ENCODE measurements at regions of chr20 and their contacts with region 1.

Region 1: GRCh38 chr20:46089417-46090388 is at the start of gene NCOA5:
- DNase-seq: peak; percentile 92 to 95
- ATAC-seq: peak; percentile 95 to 96
- H3K4me3 ChIP-seq: peak within 1 kb of the TSS; percentile 79 to 94 (median 88)
- H3K27ac ChIP-seq: peak within 1 kb of the TSS; percentile 89 to 98 (median 95)
- H3K4me1 ChIP-seq: peaks cover 45 to 47% of the 10 kb centered on the region in 2 donors
- H3K27me3 ChIP-seq: no peaks in the 10 kb centered on the region
- CTCF ChIP-seq: peak in 3 of 5 experiments; percentile 30 to 39 (median 36)
- POLR2A ChIP-seq: peak; percentile 89 to 92
- total RNA-seq, gene NCOA5: 14.7 to 21.5 (median 19.0) TPM

Region 2: DNA sequence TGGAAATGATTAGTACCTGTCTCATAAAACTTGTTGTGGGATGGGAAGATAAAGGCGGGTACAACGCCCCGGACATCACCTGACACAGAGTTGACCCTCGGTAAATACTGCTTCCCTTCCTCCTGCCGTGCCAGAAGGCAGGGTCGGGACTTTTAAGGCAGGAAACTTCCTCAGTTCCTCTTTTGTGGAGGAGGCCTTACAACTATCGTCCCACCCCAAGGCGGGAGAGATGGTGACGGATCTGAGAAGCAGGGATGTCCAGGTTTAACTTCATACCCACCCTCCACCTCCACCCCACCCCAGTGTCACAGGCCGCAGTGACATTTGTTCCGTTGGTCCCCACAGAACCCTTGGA is 297.4 kb before region 1 on chr20:
- in situ Hi-C with region 1: no loop called
- intact Hi-C with region 1: loop called (anchors 5 kb)
- DNase-seq: no peak
- ATAC-seq: no peak
- H3K4me3 ChIP-seq: peak overlapping the region; percentile 82 to 100 (median 97)
- H3K27ac ChIP-seq: peak overlapping the region; percentile 94 to 100 (median 97)
- H3K4me1 ChIP-seq: peaks cover 21 to 33% of the 10 kb centered on the region in 2 donors
- H3K27me3 ChIP-seq: no peaks in the 10 kb centered on the region
- CTCF ChIP-seq: no peak
- POLR2A ChIP-seq: no peak

Region 3: DNA sequence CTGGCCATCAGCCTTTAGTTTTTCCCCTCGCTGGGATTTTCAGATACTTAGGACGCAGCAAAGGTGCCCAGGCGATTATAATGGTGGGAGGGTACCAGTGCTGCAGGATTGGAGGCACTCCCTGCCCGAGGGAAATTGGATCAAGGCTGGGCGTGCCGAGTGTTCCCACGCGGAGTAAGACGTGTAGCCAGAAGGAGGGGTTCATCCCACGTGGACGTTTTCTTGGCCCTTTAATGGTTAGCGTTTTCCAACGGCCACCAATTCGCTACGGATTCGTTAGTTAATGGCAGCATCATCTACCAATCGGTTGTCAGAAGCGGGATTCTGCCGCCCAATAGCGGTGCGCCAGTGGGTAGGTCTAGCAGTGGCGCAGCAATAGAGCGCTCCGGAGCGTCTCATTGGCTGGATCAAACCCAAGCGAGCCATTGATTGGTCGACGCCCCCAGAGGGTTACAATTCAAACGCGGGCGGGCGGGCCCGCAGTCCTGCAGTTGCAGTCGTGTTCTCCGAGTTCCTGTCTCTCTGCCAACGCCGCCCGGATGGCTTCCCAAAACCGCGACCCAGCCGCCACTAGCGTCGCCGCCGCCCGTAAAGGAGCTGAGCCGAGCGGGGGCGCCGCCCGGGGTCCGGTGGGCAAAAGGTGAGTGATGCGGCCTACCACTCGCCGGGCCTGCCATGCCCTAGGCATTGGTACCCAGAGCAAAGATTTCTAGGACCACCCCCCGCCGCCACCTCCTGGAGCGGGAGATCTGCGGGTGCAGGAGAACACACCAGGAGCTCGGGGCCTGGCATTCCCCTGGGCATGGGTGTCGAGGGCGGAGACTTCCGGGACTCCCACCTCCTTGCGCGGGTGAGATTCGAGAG is 277.3 kb before region 1 on chr20 and contains the start of gene UBE2C:
- in situ Hi-C with region 1: loop called in 3 of 4 experiments (anchors 25 kb)
- intact Hi-C with region 1: no loop called
- DNase-seq: peak; percentile 98 to 99
- ATAC-seq: peak; percentile 97 to 100
- H3K4me3 ChIP-seq: peak within 1 kb of the TSS; percentile 53 to 70 (median 58)
- H3K27ac ChIP-seq: peak within 1 kb of the TSS; percentile 60 to 81 (median 72)
- H3K4me1 ChIP-seq: peaks cover 5 to 14% of the 10 kb centered on the region in 2 donors
- H3K27me3 ChIP-seq: no peaks in the 10 kb centered on the region
- CTCF ChIP-seq: no peak
- POLR2A ChIP-seq: peak in 1 of 2 donors; percentile 22
- total RNA-seq, gene UBE2C: 0.84 TPM in 1 of 4 donors, not detected in the others

Region 4: DNA sequence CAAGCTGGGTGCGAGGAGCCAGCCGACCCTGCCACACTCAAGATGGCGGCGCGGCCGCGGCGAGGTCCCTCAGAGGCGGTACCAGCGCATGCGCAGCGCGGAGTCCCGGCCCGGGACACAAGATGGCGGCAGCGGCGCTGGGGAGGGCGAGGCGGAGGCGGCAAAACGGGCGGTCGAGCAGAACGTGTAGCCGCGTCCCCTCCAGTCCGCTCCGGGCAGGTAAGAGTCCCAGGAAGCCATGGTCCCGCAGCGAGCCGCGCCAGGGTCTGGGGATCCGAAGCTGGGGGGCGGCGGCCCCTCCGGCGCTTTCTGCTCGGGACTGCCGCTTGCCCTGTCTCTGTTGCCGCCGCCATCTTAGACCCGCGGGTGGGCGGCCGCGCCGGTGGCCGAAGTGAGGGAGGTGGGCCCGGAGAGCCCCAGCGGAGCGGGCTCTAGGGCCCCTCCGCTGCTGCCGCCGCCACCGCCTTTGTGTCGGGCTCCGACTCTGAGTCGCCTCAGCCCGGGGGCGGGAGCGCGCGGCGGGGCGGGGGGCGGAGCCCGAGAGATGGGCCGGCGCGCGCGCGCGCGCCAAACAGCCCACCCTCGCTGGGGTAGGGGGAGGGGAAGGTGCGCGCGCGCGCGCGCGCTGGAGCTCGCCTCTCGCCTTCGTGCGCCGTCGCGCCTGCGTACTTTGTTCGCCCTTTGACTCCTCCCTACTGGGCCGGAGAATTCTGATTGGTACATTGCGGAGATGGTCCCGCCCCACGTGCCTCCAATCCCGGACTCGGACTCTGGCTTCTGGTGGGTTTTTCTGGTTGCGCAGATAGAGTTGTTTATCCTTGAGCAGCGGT is 154.9 kb before region 1 on chr20 and contains the start of gene PCIF1:
- in situ Hi-C with region 1: no loop called
- intact Hi-C with region 1: loop called (anchors 5 kb)
- DNase-seq: peak; percentile 98
- ATAC-seq: peak; percentile 91
- H3K4me3 ChIP-seq: peak within 1 kb of the TSS; percentile 83 to 99 (median 98)
- H3K27ac ChIP-seq: peak within 1 kb of the TSS; percentile 97 to 100 (median 100)
- H3K4me1 ChIP-seq: peaks cover 21 to 25% of the 10 kb centered on the region in 2 donors
- H3K27me3 ChIP-seq: no peaks in the 10 kb centered on the region
- CTCF ChIP-seq: no peak
- POLR2A ChIP-seq: peak; percentile 95 to 96
- total RNA-seq, gene PCIF1: 32.1 to 51.2 (median 37.0) TPM

Region 5: DNA sequence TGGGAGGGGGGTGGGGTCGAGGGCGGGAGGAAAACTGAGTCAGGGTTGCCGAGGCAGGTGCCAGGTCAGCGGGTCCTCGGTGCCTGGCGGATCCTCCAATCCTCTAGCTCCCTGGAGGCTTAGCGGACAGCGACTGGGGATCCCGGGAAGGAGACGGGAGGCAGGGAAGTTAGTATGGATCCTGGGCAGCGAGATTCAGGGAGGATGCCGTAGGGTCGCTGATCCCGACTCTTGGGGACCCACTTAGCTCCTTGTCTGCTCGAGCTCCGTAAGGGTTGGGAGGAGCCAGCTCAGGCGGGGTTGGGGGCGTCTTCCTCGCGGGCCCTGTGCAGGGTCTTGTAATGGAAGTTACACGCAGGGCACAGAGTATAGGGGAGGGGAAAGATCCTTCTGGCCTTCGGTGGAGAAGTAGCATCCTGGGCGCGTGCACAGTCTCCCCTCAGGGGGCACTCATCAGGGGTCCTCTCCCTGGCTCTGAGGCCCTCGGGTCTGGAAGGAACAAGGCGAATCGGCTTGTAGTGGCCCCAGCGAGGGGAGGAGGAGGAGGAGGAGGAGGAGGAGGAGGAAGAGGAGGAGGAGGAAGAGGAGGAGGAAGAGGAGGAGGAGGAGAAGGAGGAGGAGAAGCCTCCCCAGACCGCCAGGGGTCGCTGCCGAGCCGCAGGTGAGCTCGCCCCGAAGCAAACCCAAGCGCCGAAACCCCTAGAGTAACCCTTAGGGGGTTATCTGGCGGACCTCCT is 67.1 kb before region 1 on chr20:
- in situ Hi-C with region 1: no loop called
- intact Hi-C with region 1: loop called (anchors 2 kb)
- DNase-seq: no peak
- ATAC-seq: peak in 1 of 2 donors; percentile 20
- H3K4me3 ChIP-seq: peak overlapping the region in 1 of 4 donors; percentile 49
- H3K27ac ChIP-seq: no peak overlapping the region
- H3K4me1 ChIP-seq: peaks cover 4 to 13% of the 10 kb centered on the region in 2 donors
- H3K27me3 ChIP-seq: peaks cover 63 to 78% (median 68%) of the 10 kb centered on the region in 3 donors
- CTCF ChIP-seq: peak; percentile 65 to 88 (median 81)
- POLR2A ChIP-seq: no peak

Region 6: GRCh38 chr20:46255429-46256104 is 165.9 kb after region 1 on chr20:
- in situ Hi-C with region 1: no loop called
- intact Hi-C with region 1: loop called (anchors 5 kb)
- DNase-seq: peak; percentile 32 to 87
- ATAC-seq: peak in 1 of 2 donors; percentile 64
- H3K4me3 ChIP-seq: no peak overlapping the region
- H3K27ac ChIP-seq: no peak overlapping the region
- H3K4me1 ChIP-seq: peaks cover 0 to 9% of the 10 kb centered on the region in 2 donors
- H3K27me3 ChIP-seq: peaks cover 18 to 21% (median 18%) of the 10 kb centered on the region in 3 donors
- CTCF ChIP-seq: no peak
- POLR2A ChIP-seq: no peak

Region 7: GRCh38 chr20:46406199-46406985 is 316.7 kb after region 1 on chr20 and contains the start of gene ELMO2:
- in situ Hi-C with region 1: no loop called
- intact Hi-C with region 1: loop called (anchors 1 kb)
- DNase-seq: peak; percentile 97 to 98
- ATAC-seq: peak; percentile 93 to 94
- H3K4me3 ChIP-seq: peak within 1 kb of the TSS; percentile 83 to 98 (median 90)
- H3K27ac ChIP-seq: peak within 1 kb of the TSS; percentile 94 to 98 (median 96)
- H3K4me1 ChIP-seq: peaks cover 52 to 56% of the 10 kb centered on the region in 2 donors
- H3K27me3 ChIP-seq: no peaks in the 10 kb centered on the region
- CTCF ChIP-seq: peak in 4 of 5 experiments; percentile 34 to 50 (median 42)
- POLR2A ChIP-seq: peak; percentile 86 to 88
- total RNA-seq, gene ELMO2: 47.6 to 67.5 (median 53.6) TPM